ENCODE measurements at regions of chr9 and their contacts with region 1.

Region 1: GRCh38 chr9:33065157-33066076 is 11.1 kb downstream of the SMU1 start:
- DNase-seq: no peak
- H3K4me3 ChIP-seq: no peak overlapping the region
- H3K27ac ChIP-seq: no peak overlapping the region
- H3K4me1 ChIP-seq: no peaks in the 10 kb centered on the region
- H3K27me3 ChIP-seq: no peaks in the 10 kb centered on the region
- CTCF ChIP-seq: no peak
- EP300 ChIP-seq: no peak
- POLR2A ChIP-seq: no peak
- RAD21 ChIP-seq: no peak

Region 2: GRCh38 chr9:33076358-33077004 is 11.1 kb after region 1 on chr9 and contains the start of gene SMU1:
- CTCF ChIA-PET with region 1: interaction called, 4 read pairs
- POLR2A ChIA-PET with region 1: interaction called, 10 read pairs
- DNase-seq: peak; percentile 92 to 95
- H3K4me3 ChIP-seq: peak within 1 kb of the TSS; percentile 91 to 99 (median 94)
- H3K27ac ChIP-seq: peak within 1 kb of the TSS; percentile 85
- H3K4me1 ChIP-seq: no peaks in the 10 kb centered on the region; a peak in 1 of 7 replicates
- H3K27me3 ChIP-seq: no peaks in the 10 kb centered on the region
- CTCF ChIP-seq: no peak
- EP300 ChIP-seq: no peak
- POLR2A ChIP-seq: peak; percentile 82 to 92
- RAD21 ChIP-seq: no peak
- total RNA-seq, gene SMU1: 25.2 and 26.0 TPM in 2 replicates